Calu3 (cell line): ENCODE measurements at regions of chr2 and their contacts with region 1.

Region 1: GRCh38 chr2:241003830-241004564 is 5.6 kb downstream of the SNED1 start:
- DNase-seq: no peak
- H3K4me3 Mint-ChIP-seq: no peak overlapping the region
- H3K27ac Mint-ChIP-seq: no peak overlapping the region
- H3K4me1 Mint-ChIP-seq: peaks cover 4% of the 10 kb centered on the region
- H3K27me3 Mint-ChIP-seq: peaks cover 81% of the 10 kb centered on the region
- CTCF ChIP-seq: no peak

Region 2: DNA sequence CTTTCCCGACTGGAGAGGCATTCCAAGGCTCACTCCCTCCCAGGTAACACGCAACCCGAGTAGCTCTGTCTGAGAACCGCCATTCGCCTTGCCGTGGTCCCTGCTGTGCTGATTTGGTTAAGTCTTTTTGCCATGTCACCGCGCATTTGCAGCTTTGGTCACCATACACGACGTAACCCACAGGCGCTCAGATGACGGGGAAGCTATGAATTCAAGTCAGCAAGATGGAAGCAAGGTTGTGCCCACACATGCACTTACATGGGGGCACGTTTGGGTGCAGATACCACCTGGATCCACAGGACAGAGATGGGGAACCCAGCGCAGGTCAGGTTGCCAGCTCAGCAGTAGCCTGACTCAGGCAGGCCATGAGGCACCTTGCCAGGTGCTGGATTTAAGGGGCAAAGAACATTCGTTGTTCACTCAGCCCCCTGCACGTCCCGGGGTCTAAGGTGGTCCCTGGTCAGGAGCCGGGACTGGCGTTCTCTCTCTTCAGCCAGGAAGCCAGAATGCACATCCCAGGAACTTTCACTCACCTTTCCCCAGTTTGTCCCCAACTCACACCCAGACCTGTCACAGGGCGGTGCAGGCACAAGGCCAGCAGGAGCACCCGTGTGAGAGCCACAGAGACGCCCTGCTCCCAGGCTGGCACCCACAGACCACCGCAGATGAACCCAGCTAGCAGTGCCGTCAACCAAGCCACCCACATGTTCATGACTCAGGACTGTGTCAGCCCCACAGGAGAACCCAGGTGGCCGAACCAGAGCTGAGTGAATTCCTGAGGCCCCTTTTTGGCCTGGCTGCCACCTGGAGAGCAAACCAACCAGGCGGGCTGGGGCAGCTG is 14.3 kb after region 1 on chr2:
- CTCF ChIA-PET with region 1: no interaction called
- intact Hi-C with region 1: loop called (anchors 2 kb)
- DNase-seq: no peak
- H3K4me3 Mint-ChIP-seq: no peak overlapping the region
- H3K27ac Mint-ChIP-seq: no peak overlapping the region
- H3K4me1 Mint-ChIP-seq: no peaks in the 10 kb centered on the region
- H3K27me3 Mint-ChIP-seq: peaks cover 24% of the 10 kb centered on the region
- CTCF ChIP-seq: no peak